AG04449 (cell line): ENCODE measurements at regions of chr7 and their contacts with region 1.

Region 1: DNA sequence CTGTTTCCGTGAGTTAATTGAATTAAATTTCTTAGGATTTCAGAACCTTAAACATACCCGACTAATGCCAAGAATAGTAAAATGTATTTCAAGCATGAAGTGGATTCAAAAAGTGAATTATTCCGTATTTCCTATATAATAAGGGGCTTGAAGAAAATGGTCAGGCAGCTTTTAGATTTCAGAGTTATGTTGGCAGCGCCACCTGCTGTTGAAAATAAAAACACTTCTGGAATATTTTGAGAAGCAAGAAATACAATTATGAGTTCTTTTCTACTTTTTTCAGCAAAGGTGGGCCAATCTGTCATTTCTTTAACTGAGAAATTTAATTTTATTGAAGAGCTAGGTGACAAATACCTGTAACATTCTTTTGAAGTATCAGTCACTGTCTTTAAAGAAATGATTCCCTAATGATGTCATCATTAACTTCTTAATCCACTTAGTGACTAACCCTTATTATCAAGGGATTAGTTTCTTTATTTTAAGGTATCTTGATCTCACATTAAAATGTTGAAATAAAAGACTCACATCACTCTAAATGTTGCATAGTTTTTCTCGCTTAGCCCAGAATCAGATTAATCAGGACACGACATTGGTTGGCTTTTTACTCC is 36.6 kb upstream of the AGR3 start:
- DNase-seq: no peak
- H3K4me3 ChIP-seq: no peak overlapping the region
- CTCF ChIP-seq: peak; percentile 32

Region 2: GRCh38 chr7:16695621-16696237 is 222.7 kb before region 1 on chr7:
- CTCF ChIA-PET with region 1: interaction called, 92 read pairs
- POLR2A ChIA-PET with region 1: no interaction called
- DNase-seq: no peak
- H3K4me3 ChIP-seq: no peak overlapping the region
- CTCF ChIP-seq: peak; percentile 50

Region 3: GRCh38 chr7:16801111-16801542 is 117.3 kb before region 1 on chr7:
- CTCF ChIA-PET with region 1: interaction called, 88 read pairs
- POLR2A ChIA-PET with region 1: interaction called, 3 read pairs
- DNase-seq: peak; percentile 28
- H3K4me3 ChIP-seq: no peak overlapping the region
- CTCF ChIP-seq: peak; percentile 42

Region 4: GRCh38 chr7:16900209-16900768 is 18.1 kb before region 1 on chr7:
- CTCF ChIA-PET with region 1: interaction called, 107 read pairs
- POLR2A ChIA-PET with region 1: no interaction called
- DNase-seq: no peak
- H3K4me3 ChIP-seq: no peak overlapping the region
- CTCF ChIP-seq: no peak

Region 5: DNA sequence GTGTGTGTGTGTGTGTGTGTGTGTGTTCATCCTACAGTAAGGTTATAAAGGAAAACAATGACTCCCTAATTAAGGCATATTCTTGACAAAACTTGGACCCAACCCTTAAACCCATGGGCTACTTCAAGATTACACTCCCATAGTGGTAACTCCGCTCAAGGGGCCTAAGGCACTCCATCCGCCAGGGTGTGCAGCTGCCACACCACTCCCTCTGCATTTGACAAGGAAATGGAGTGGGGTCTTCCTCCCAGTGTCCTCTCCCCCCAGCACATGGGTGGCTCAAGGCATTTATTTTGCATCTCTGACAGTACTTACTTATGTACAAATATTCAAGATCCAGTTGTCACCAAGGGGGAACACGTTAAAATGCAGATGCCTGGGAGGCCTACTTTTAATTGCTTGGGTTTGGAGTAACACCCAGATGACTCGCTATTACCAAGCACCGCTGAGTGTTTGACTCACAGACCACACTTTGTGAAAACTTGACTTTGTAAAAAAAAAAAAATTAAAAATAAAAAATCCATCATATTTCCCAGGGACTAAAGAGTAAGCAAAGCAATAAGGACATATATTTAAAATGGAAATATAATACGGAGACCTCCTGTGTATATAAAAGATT is 16.4 kb after region 1 on chr7:
- CTCF ChIA-PET with region 1: interaction called, 14 read pairs
- POLR2A ChIA-PET with region 1: no interaction called
- DNase-seq: no peak
- H3K4me3 ChIP-seq: no peak overlapping the region
- CTCF ChIP-seq: no peak